ENCODE measurements at regions of chr14 and their contacts with region 1.

Region 1: GRCh38 chr14:68884031-68885030 is 91.5 kb upstream of the ZFP36L1 start:
- DNase-seq: peak; percentile 97
- ATAC-seq: peak; percentile 95
- H3K4me3 ChIP-seq: no peak overlapping the region
- H3K27ac ChIP-seq: peak overlapping the region; percentile 94
- H3K4me1 ChIP-seq: peaks cover 25% of the 10 kb centered on the region
- H3K27me3 ChIP-seq: no peaks in the 10 kb centered on the region
- CTCF ChIP-seq: no peak

Region 2: DNA sequence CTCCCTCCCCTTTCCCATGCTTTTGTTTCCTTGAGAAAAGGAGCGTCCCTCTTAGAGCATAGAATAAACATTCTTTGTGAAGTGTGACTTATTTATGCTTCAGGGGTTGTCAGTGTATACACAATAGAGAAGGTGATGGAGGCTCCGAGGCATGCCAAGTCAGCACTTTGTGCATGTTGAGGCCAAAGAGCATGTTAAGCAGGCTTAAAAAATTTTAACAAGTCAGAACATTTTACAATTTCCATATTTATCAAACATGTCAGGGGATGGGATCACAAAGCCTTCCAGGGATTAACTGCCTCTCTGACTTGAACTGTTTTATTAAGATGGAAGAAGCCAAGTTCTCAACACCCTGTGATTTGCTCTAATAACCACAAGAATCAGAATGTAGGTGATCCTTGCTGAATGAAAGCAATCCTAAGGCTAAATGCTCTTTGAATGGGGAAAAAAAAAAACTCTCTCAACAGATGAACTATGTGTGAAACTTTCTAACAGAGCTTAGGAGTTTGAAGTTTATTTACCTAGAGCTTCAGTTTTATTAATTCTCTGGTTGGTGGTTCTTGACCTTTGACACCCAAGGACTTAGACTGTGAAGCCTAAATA is 841.6 kb before region 1 on chr14:
- CTCF ChIA-PET with region 1: interaction called, 12 read pairs
- POLR2A ChIA-PET with region 1: no interaction called
- intact Hi-C with region 1: no loop called
- DNase-seq: peak; percentile 6
- ATAC-seq: peak; percentile 26
- H3K4me3 ChIP-seq: no peak overlapping the region
- H3K27ac ChIP-seq: no peak overlapping the region
- H3K4me1 ChIP-seq: peaks cover 15% of the 10 kb centered on the region
- H3K27me3 ChIP-seq: no peaks in the 10 kb centered on the region
- CTCF ChIP-seq: no peak

Measured in PC-3 (cell line).